Esophagus muscularis mucosa (tissue), 4 donors: ENCODE measurements at regions of chr7 and their contacts with region 1.

Region 1: GRCh38 chr7:121385800-121386179 is 10.3 kb downstream of the FAM3C start:
- DNase-seq: no peak
- H3K4me3 ChIP-seq: no peak overlapping the region
- H3K27ac ChIP-seq: no peak overlapping the region
- H3K4me1 ChIP-seq: peaks cover 17 to 42% (median 37%) of the 10 kb centered on the region in 4 donors
- H3K27me3 ChIP-seq: no peaks in the 10 kb centered on the region
- CTCF ChIP-seq: no peak
- EP300 ChIP-seq: no peak
- POLR2A ChIP-seq: no peak

Region 2: GRCh38 chr7:121116396-121116795 is 269.4 kb before region 1 on chr7:
- intact Hi-C with region 1: no loop called
- DNase-seq: no peak
- H3K4me3 ChIP-seq: no peak overlapping the region
- H3K27ac ChIP-seq: no peak overlapping the region
- H3K4me1 ChIP-seq: peaks cover 0 to 6% (median 0%) of the 10 kb centered on the region in 4 donors
- H3K27me3 ChIP-seq: no peaks in the 10 kb centered on the region
- CTCF ChIP-seq: no peak
- EP300 ChIP-seq: no peak
- POLR2A ChIP-seq: no peak

Region 3: DNA sequence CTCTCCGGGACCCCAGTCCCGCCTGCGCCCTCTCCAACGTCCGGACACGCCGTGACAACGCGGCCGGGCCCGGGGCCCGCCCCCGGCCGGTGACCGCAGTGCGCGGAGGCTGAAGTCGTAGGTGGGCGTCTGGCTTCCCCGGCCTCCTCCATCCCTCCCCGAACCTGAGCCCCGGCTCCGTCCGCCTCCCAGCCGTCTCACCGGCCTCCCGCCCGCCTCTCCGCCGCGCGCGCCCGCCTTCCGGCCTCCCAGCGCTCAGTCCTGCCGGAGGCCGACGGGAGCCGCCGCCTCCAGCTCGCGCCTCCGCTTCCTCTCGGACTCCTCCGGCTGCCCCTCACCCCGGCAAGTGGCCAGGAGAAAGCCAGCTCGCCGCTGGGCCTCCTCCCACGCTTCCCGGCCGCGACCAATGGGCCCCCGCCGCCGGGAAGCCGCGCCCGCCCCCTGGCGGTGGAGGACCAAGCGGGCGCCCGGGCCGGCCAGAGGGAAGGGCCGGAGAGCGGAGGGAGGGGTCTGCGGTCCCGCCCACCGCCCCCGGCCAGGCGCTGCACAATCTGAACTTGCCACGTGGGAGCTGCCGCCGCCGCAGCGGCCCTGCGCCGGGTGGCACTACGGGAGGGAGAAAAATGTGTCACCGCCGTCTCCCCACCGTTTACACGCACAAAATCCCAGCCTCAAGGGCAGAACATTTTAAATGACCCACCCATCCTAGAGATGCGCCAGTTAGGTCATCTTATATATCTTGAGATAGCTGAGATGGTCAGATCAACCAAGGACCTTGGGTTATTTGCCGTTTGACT is 10.4 kb after region 1 on chr7 and contains the start of gene FAM3C:
- intact Hi-C with region 1: loop called (anchors 1 kb)
- DNase-seq: peak; percentile 94
- H3K4me3 ChIP-seq: peak within 1 kb of the TSS; percentile 79 to 99 (median 96)
- H3K27ac ChIP-seq: peak within 1 kb of the TSS; percentile 84 to 90 (median 87)
- H3K4me1 ChIP-seq: peaks cover 5 to 24% (median 9%) of the 10 kb centered on the region in 4 donors
- H3K27me3 ChIP-seq: no peaks in the 10 kb centered on the region
- CTCF ChIP-seq: peak; percentile 95 to 98 (median 96)
- EP300 ChIP-seq: no peak
- POLR2A ChIP-seq: peak; percentile 26
- total RNA-seq, gene FAM3C: 26.6 to 41.9 (median 30.7) TPM